ENCODE measurements at regions of chr7 and their contacts with region 1.

Region 1: GRCh38 chr7:6323967-6324701 is 51.7 kb upstream of the CYTH3 start:
- DNase-seq: no peak
- H3K4me3 ChIP-seq: no peak overlapping the region
- H3K27ac ChIP-seq: no peak overlapping the region
- H3K4me1 ChIP-seq: no peaks in the 10 kb centered on the region
- H3K27me3 ChIP-seq: no peaks in the 10 kb centered on the region
- CTCF ChIP-seq: no peak
- POLR2A ChIP-seq: no peak

Region 2: GRCh38 chr7:4700577-4701235 is 1623.4 kb before region 1 on chr7:
- intact Hi-C with region 1: loop called (anchors 5 kb)
- DNase-seq: no peak
- H3K4me3 ChIP-seq: no peak overlapping the region
- H3K27ac ChIP-seq: no peak overlapping the region
- H3K4me1 ChIP-seq: no peaks in the 10 kb centered on the region
- H3K27me3 ChIP-seq: no peaks in the 10 kb centered on the region
- CTCF ChIP-seq: no peak
- POLR2A ChIP-seq: no peak

Region 3: DNA sequence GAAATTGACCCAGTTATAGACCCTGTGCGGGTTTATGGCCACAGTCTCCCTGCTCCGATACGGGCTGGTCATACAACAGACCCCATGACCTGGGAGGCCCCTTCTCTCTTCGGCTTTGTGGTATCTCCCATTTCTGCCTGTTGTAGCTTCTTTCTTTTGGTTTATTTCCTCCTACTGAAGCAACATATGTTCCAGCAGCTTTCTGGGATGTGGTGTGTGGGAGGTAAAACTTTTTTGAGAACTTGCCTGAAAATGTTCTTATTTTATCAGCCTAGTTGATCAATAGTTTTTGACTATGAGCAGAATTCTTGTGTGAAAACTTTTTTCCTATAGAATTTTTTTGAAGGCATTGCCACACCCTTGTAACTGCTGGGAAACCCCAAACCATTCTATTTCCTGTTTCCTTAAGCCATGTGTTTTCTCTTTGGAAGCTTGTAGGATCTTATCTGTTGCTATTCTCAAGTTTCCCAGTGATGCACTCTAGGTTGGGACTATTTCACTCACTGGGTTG is 43.6 kb after region 1 on chr7:
- intact Hi-C with region 1: no loop called
- DNase-seq: no peak
- H3K4me3 ChIP-seq: no peak overlapping the region
- H3K27ac ChIP-seq: peak overlapping the region; percentile 41 to 73
- H3K4me1 ChIP-seq: no peaks in the 10 kb centered on the region
- H3K27me3 ChIP-seq: no peaks in the 10 kb centered on the region
- CTCF ChIP-seq: no peak
- POLR2A ChIP-seq: no peak

Region 4: GRCh38 chr7:7816084-7816483 is 1492.0 kb after region 1 on chr7:
- intact Hi-C with region 1: no loop called
- DNase-seq: no peak
- H3K4me3 ChIP-seq: no peak overlapping the region
- H3K27ac ChIP-seq: no peak overlapping the region
- H3K4me1 ChIP-seq: no peaks in the 10 kb centered on the region
- H3K27me3 ChIP-seq: no peaks in the 10 kb centered on the region
- CTCF ChIP-seq: no peak
- POLR2A ChIP-seq: no peak